ENCODE measurements at regions of chr17 and their contacts with region 1.

Region 1: DNA sequence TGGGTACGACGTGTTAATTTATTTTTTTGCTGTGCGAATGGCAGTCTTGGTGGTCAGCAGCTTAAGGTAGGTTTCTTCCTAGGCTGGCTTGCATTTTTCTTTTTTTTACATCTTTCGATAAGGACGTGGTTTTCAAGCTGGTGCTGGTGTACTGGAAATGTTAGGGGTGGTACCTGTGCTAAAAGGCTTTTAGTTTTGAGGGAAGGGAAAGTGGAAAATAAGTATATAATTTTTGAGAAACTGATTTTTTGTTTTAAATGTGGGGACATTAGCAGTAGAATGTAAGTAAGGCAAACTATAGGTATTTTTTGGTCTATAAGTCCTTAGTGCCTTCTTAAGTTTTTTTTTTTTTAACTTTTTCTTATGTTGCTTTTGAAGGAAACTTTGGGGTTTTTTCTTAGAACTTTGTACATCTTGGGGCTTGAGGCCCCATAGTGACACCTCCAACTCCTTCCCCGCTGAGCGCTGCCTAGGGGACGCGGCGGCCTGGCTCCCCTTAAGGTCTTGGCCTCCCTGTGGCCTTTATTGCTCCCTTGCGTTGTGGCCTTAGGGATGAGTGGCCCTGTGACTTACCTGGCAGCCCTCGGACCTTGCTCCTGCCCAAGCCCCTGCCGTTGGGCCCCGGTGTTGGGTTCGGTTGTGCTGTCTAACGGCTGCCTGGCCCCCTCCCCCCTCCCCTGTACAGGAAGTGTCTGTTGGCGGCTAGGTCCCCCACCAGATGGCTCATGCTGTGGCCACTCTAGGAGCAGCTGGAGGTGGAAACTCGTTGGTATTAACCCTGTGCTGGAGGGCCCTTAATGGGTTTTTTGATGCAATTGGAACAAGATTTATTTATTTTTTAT is 88.0 kb upstream of the RPRML start:
- DNase-seq: peak; percentile 89
- H3K4me3 Mint-ChIP-seq: peak overlapping the region; percentile 95
- H3K27ac Mint-ChIP-seq: peak overlapping the region; percentile 99
- H3K4me1 Mint-ChIP-seq: peaks cover 34% of the 10 kb centered on the region
- H3K27me3 Mint-ChIP-seq: no peaks in the 10 kb centered on the region
- CTCF ChIP-seq: no peak

Region 2: GRCh38 chr17:47099987-47100711 is 33.1 kb after region 1 on chr17:
- CTCF ChIA-PET with region 1: interaction called, 4 read pairs
- POLR2A ChIA-PET with region 1: interaction called, 6 read pairs
- intact Hi-C with region 1: loop called (anchors 1 kb)
- DNase-seq: peak; percentile 92
- H3K4me3 Mint-ChIP-seq: peak overlapping the region; percentile 89
- H3K27ac Mint-ChIP-seq: peak overlapping the region; percentile 92
- H3K4me1 Mint-ChIP-seq: peaks cover 8% of the 10 kb centered on the region
- H3K27me3 Mint-ChIP-seq: no peaks in the 10 kb centered on the region
- CTCF ChIP-seq: no peak

Region 3: GRCh38 chr17:47172698-47173565 is 105.9 kb after region 1 on chr17:
- CTCF ChIA-PET with region 1: no interaction called
- POLR2A ChIA-PET with region 1: no interaction called
- intact Hi-C with region 1: no loop called
- DNase-seq: no peak
- H3K4me3 Mint-ChIP-seq: no peak overlapping the region
- H3K27ac Mint-ChIP-seq: no peak overlapping the region
- H3K4me1 Mint-ChIP-seq: peaks cover 10% of the 10 kb centered on the region
- H3K27me3 Mint-ChIP-seq: no peaks in the 10 kb centered on the region
- CTCF ChIP-seq: no peak